ENCODE measurements at regions of chr2 and their contacts with region 1.

Region 1: DNA sequence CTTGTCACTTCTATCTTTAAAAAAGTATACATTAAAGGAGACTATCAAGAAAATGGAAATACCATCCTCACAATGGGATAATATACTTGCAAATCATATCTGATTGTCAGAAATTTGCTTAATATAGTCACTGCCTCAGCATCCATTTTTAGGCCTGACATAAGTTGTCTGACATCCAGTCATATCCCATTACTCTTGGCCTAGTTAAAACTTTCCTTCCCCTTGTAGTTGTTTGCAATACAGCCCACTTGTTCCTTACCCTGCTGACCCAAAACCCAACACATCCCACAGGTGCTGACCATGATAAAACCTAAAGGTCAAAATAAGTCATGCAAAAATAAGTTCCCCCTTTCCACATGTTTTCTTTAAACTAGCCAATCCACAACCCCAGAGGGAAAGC is 3.6 kb upstream of the ARHGEF33 start:
- DNase-seq: no peak
- ATAC-seq: peak in 2 of 8 donors; percentile 39 to 62
- H3K4me3 ChIP-seq: no peak overlapping the region
- H3K27ac ChIP-seq: no peak overlapping the region
- H3K4me1 ChIP-seq: no peaks in the 10 kb centered on the region
- H3K27me3 ChIP-seq: no peaks in the 10 kb centered on the region
- CTCF ChIP-seq: no peak

Region 2: GRCh38 chr2:38572167-38572566 is 313.9 kb before region 1 on chr2:
- intact Hi-C with region 1: loop called in 1 of 10 experiments (anchors 10 kb)
- DNase-seq: no peak
- ATAC-seq: peak in 2 of 8 donors; percentile 41 to 46
- H3K4me3 ChIP-seq: no peak overlapping the region
- H3K27ac ChIP-seq: peak overlapping the region in 1 of 10 donors; percentile 37
- H3K4me1 ChIP-seq: peaks cover 0 to 23% (median 4%) of the 10 kb centered on the region in 9 donors
- H3K27me3 ChIP-seq: no peaks in the 10 kb centered on the region
- CTCF ChIP-seq: no peak

Region 3: GRCh38 chr2:38771632-38772031 is 114.4 kb before region 1 on chr2:
- intact Hi-C with region 1: no loop called
- DNase-seq: no peak
- ATAC-seq: no peak
- H3K4me3 ChIP-seq: no peak overlapping the region
- H3K27ac ChIP-seq: no peak overlapping the region
- H3K4me1 ChIP-seq: no peaks in the 10 kb centered on the region
- H3K27me3 ChIP-seq: peaks cover 0 to 2% (median 0%) of the 10 kb centered on the region in 7 donors
- CTCF ChIP-seq: no peak

Region 4: DNA sequence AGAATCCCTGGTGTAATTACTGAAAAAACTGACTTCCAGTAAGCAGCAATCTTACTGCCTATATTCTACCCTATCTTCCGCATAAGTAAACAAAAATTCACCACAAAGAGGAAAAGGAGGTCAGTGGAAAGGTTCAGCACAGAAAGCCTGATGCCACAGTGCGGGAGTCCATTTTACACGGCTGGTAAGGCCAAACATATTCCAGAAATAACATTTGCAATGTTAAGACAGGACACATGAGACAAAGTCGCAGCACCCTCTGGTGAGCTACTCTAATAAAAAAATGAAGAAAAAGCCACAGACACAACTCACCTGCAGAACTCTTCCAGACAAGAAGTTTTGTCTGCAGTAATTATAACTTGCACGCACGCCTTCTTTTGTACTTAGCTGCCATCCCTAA is 67.5 kb before region 1 on chr2:
- intact Hi-C with region 1: no loop called
- DNase-seq: no peak
- ATAC-seq: no peak
- H3K4me3 ChIP-seq: no peak overlapping the region
- H3K27ac ChIP-seq: no peak overlapping the region
- H3K4me1 ChIP-seq: no peaks in the 10 kb centered on the region
- H3K27me3 ChIP-seq: no peaks in the 10 kb centered on the region
- CTCF ChIP-seq: no peak

Region 5: GRCh38 chr2:39379643-39380524 is 493.8 kb after region 1 on chr2:
- intact Hi-C with region 1: no loop called
- DNase-seq: peak in 1 of 2 donors; percentile 53
- ATAC-seq: peak; percentile 62 to 89 (median 80)
- H3K4me3 ChIP-seq: no peak overlapping the region
- H3K27ac ChIP-seq: peak overlapping the region; percentile 28 to 73 (median 59)
- H3K4me1 ChIP-seq: peaks cover 2 to 68% (median 53%) of the 10 kb centered on the region in 9 donors
- H3K27me3 ChIP-seq: no peaks in the 10 kb centered on the region
- CTCF ChIP-seq: peak; percentile 30 to 83 (median 66)

Measured in heart right ventricle (tissue), 16 donors.